ENCODE measurements at regions of chr9 and their contacts with region 1.

Region 1: DNA sequence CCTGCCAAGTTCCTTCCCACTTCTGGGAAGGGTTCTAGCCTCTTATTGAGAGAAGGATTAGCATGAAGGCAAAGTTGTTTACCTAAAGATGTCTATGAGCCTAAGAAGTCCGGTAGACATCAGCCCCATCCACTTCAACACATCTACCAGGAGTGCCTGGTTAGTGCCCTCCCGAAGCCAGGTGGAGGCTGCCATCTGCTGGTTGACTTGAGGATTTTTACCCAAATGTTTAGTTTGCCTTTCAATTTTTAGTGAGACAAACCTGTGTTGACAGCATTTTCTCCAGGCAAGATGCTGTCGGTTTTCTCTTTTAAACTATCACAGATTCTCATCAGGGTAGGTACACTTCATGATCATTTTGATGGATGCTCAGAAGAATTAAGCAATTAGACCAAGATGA is 83.6 kb upstream of the TNFSF8 start:
- DNase-seq: peak; percentile 72 to 79
- ATAC-seq: peak; percentile 72 to 90
- H3K4me3 ChIP-seq: no peak overlapping the region
- H3K27ac ChIP-seq: no peak overlapping the region
- H3K4me1 ChIP-seq: 0 out of 3 replicates have a peak, but pooled peaks cover under 1% of the 10 kb centered on the region
- CTCF ChIP-seq: peak; percentile 93
- EP300 ChIP-seq: no peak
- POLR2A ChIP-seq: no peak
- RAD21 ChIP-seq: peak; percentile 98

Region 2: GRCh38 chr9:114434878-114435311 is 579.1 kb before region 1 on chr9:
- CTCF ChIA-PET with region 1: interaction called, 26 read pairs
- POLR2A ChIA-PET with region 1: no interaction called
- DNase-seq: peak; percentile 47 to 63
- ATAC-seq: peak; percentile 77 to 91; a peak in 5 of 6 replicates
- H3K4me3 ChIP-seq: no peak overlapping the region
- H3K27ac ChIP-seq: no peak overlapping the region
- H3K4me1 ChIP-seq: no peaks in the 10 kb centered on the region
- CTCF ChIP-seq: peak; percentile 66
- EP300 ChIP-seq: no peak
- POLR2A ChIP-seq: no peak
- RAD21 ChIP-seq: peak; percentile 78 to 87

Region 3: DNA sequence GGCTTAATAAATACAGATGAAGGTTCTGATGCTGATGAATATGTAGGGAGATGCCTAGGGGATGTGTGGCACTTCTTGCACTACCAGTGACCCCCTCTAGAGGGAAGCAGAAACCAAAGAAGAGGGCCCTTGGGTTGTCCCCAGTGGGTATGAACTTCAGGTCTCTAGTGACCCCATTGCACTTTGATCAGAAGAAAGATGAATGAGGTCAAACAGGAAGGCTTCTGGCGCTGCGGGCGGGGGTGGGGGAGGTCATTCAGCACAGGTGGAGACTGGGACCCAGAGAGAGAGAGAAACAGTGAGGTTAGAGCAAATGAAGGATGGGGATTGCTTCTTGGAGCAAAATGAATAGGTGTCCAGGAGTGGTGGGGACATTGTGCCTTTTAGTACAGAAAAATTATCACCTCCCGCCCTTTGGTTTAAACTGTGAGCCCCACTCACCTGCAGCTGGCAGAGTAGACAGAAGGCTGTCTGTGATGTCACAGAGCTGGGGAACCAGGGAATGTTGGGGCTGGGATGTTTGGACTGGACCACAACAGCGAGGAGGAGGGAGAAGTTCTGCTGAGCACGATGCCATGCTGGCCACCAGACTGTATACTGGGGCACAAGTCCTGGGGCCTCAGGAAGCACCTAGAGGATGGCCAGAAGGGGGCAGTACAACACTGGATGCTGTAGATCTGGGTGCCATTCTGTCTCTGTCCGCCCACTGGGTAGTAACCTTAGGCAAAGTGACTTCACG is 332.2 kb before region 1 on chr9 and contains the start of gene TEX48:
- CTCF ChIA-PET with region 1: interaction called, 55 read pairs
- POLR2A ChIA-PET with region 1: no interaction called
- DNase-seq: peak; percentile 66 to 88
- ATAC-seq: peak; percentile 80 to 87
- H3K4me3 ChIP-seq: no peak within 1 kb of the TSS
- H3K27ac ChIP-seq: peak within 1 kb of the TSS; percentile 9 to 48; a peak in 3 of 6 replicates
- H3K4me1 ChIP-seq: peaks cover 32% of the 10 kb centered on the region
- CTCF ChIP-seq: peak; percentile 61
- EP300 ChIP-seq: no peak
- POLR2A ChIP-seq: no peak
- RAD21 ChIP-seq: peak; percentile 76 to 92
- polyA plus RNA-seq, gene TEX48: 0.16 TPM in 1 of 2 replicates, not detected in the other

Region 4: DNA sequence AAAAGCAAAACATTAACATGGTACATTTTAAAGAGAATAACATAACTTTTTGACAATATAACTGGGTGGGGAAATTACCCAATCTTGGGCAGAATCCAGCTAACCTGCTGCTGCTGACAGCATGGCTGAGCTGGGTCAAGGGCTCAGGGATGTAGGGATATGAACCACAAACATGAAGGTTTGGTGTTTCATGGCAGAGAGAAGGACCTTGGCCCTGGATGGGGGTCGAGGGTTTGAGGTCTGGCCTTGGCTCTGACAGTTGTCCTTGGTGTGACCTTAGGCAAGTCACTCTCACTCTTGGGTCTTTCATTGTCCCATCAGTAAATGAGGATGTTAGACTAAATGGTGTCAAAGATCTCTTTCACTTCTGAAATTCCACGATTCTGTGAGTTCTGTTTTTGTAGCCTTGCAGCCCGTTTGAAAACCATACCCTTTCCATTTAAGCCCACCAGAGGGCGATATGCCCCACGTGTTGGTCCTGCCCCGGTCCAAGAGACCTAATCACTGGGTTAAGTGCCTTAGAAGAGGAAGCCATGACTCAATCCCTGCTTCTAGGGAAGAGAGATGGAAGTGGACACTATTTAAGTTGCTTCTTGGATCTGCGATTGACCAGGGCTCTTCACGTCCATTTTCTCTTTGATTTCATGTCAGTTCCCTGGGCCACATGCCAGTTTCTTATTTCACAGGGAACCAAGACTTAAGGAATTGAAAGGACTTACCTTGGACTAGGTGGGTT is 275.2 kb before region 1 on chr9:
- CTCF ChIA-PET with region 1: interaction called, 16 read pairs
- POLR2A ChIA-PET with region 1: no interaction called
- DNase-seq: peak; percentile 71 to 84
- ATAC-seq: peak; percentile 89 to 97
- H3K4me3 ChIP-seq: no peak overlapping the region
- H3K27ac ChIP-seq: peak overlapping the region; percentile 24 to 68; a peak in 5 of 6 replicates
- H3K4me1 ChIP-seq: peaks cover 26% of the 10 kb centered on the region
- CTCF ChIP-seq: peak; percentile 89
- EP300 ChIP-seq: no peak
- POLR2A ChIP-seq: no peak
- RAD21 ChIP-seq: peak; percentile 98 to 99

Region 5: DNA sequence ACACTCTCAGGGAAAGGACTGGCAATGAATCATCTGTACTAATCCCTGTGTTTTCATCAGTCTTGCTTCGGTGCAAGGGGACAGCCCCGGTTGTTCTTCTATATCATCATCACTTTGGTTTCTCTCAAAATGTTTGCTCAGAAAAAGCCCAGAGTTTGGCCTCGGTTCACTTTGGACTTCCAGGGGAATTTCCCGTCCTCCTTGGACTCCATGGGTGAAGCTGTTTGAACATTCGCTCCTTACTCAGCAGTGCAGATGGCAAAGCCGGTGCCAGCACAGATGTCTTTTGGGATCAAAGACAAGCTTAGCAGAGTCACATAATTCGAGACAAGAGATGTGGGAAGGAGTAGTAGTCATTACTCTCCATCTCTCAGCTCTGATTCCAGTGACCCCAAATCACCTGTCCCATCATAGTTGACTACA is 13.8 kb before region 1 on chr9:
- CTCF ChIA-PET with region 1: interaction called, 24 read pairs
- POLR2A ChIA-PET with region 1: no interaction called
- DNase-seq: no peak
- ATAC-seq: no peak
- H3K4me3 ChIP-seq: no peak overlapping the region
- H3K27ac ChIP-seq: no peak overlapping the region
- H3K4me1 ChIP-seq: no peaks in the 10 kb centered on the region
- CTCF ChIP-seq: no peak
- EP300 ChIP-seq: no peak
- POLR2A ChIP-seq: no peak
- RAD21 ChIP-seq: no peak

Region 6: DNA sequence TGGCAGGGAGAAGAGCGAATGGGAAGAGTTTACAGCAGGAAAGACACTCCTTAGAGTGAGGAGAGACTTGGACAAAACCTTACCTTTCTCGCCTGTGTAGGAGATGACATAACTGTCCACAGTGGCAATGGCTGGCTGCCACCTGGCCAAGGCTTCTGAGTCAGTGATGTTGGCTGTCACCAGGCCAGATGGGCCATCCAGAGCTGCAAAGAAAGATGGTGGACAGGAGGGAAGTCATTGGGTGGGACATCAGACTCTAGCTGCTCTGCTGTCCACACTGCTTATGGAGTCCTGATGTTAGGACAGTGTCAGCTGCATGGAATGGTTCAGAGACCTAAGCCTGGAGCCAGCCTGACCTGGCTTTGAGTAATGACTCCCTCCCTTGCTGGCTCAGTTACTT is 24.2 kb after region 1 on chr9:
- CTCF ChIA-PET with region 1: interaction called, 17 read pairs
- POLR2A ChIA-PET with region 1: no interaction called
- DNase-seq: no peak
- ATAC-seq: no peak
- H3K4me3 ChIP-seq: no peak overlapping the region
- H3K27ac ChIP-seq: no peak overlapping the region
- H3K4me1 ChIP-seq: 0 out of 3 replicates have a peak, but pooled peaks cover 6% of the 10 kb centered on the region
- CTCF ChIP-seq: no peak
- EP300 ChIP-seq: no peak
- POLR2A ChIP-seq: no peak
- RAD21 ChIP-seq: no peak

Region 7: GRCh38 chr9:115071176-115071575 is 57.2 kb after region 1 on chr9:
- CTCF ChIA-PET with region 1: no interaction called
- POLR2A ChIA-PET with region 1: no interaction called
- DNase-seq: no peak
- ATAC-seq: no peak
- H3K4me3 ChIP-seq: no peak overlapping the region
- H3K27ac ChIP-seq: no peak overlapping the region
- H3K4me1 ChIP-seq: no peaks in the 10 kb centered on the region
- CTCF ChIP-seq: no peak
- EP300 ChIP-seq: no peak
- POLR2A ChIP-seq: no peak
- RAD21 ChIP-seq: no peak

Region 8: DNA sequence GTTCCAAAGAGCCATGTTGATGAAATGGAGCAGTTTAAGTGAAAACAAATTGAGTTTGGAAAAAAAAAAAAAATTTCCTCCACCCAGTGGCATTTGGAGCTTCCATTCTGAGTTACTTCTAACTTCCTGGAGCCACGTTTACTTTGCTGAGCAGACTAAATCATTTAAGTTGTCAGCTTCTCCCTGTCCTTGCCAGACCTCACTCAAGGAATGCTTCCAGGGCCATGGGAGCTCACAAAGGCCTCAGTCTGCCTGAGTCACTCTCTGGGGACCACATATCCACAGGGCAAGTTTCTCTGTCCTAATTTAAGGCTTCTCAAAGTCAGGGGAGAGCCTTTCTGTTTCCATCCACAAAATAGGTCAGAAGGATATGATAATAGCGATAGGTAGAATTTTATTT is 314.2 kb after region 1 on chr9:
- CTCF ChIA-PET with region 1: no interaction called
- POLR2A ChIA-PET with region 1: no interaction called
- DNase-seq: no peak
- ATAC-seq: no peak
- H3K4me3 ChIP-seq: no peak overlapping the region
- H3K27ac ChIP-seq: no peak overlapping the region
- H3K4me1 ChIP-seq: no peaks in the 10 kb centered on the region
- CTCF ChIP-seq: no peak
- EP300 ChIP-seq: no peak
- POLR2A ChIP-seq: no peak
- RAD21 ChIP-seq: no peak

Measured in A549 (cell line).